WTC11 (cell line): ENCODE measurements at regions of chr6 and their contacts with region 1.

Region 1: GRCh38 chr6:116405138-116405537 is 34.4 kb downstream of the DSE start:
- DNase-seq: no peak
- ATAC-seq: peak; percentile 45
- H3K4me3 Mint-ChIP-seq: peak overlapping the region; percentile 14
- H3K27ac Mint-ChIP-seq: peak overlapping the region; percentile 90
- H3K4me1 Mint-ChIP-seq: peaks cover 54% of the 10 kb centered on the region
- H3K27me3 Mint-ChIP-seq: no peaks in the 10 kb centered on the region
- CTCF ChIP-seq: no peak

Region 2: DNA sequence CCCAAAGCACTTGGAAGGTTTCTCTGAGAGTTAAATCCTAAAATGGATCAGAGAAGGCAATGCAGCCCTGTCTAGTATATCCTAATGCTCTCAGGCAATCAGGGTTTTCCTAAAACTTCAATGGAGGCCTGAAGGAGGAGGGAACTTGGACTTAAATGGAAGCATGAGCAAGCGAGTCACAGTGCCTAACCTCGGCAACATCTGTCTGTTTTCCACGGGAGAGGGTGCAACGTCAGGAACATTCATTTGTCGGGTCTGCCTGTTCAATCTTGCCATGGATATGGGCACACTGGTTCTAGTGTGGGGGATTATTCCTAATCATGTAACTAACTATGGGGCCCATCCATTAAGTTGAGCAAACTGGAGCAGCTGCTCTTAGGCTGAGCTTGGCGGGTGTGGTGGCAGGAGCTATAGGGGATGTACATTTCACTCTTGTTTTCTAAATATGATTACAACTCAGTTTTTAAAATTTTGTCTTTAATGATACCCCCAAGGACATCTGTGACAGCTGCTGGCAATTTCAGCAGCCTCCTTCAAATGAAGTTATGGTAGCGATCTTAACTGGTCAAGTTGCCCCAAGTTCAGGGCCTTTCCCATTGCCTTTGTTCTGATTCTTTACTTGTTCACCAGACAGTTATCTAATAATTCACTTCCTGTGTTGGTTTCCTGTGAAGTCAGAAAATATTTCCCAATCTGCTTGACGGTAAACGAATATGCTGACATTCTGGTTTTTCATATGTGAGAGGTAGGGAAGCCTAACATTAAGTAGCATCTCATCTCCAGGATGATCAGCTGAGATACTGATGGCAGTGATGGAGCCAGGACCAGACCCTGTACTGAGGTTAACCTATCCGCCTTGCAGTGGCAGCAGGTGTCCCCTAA is 12.8 kb before region 1 on chr6:
- CTCF ChIA-PET with region 1: interaction called, 10 read pairs
- POLR2A ChIA-PET with region 1: no interaction called
- DNase-seq: no peak
- ATAC-seq: no peak
- H3K4me3 Mint-ChIP-seq: no peak overlapping the region
- H3K27ac Mint-ChIP-seq: peak overlapping the region; percentile 17
- H3K4me1 Mint-ChIP-seq: peaks cover 18% of the 10 kb centered on the region
- H3K27me3 Mint-ChIP-seq: no peaks in the 10 kb centered on the region
- CTCF ChIP-seq: no peak